A549 (cell line): ENCODE measurements at regions of chr10 and their contacts with region 1.

Region 1: DNA sequence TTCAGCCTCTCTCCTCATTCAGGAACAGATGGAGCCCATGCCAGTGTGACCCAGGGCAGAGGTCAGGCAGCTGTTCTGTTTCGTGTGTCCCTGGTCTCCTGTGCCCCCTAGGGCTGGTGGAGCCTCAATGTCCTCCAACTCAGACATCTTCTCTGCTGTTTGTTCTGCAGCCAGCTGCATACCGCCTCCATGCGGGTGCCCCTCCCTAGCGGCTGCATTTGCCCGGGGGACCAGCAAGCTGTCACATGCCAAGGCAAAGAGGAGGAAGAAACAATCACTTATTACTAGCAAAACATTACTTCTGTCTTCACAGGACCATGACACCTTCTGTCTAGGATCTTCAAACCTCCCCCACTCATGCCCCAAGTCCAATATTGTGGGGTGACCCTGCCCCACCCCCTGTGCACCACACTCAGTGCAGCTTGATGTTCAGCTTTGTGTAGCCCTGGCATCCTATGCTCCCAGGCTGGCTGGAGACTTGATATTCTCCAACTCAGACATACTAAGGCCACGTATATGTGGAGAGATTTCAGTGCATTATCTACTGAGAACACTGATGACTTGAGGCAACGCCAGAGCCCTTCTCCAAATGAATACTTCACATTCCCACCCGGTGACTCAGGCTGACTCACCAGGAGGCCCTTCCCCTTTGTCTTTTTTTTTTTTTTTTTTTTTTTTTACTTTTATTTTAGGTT is 188.9 kb downstream of the SKIDA1 start:
- DNase-seq: peak; percentile 86 to 97
- ATAC-seq: peak; percentile 88 to 90
- H3K4me3 ChIP-seq: no peak overlapping the region
- H3K27ac ChIP-seq: peak overlapping the region; percentile 95 to 96
- H3K4me1 ChIP-seq: peaks cover 55% of the 10 kb centered on the region
- CTCF ChIP-seq: peak; percentile 31
- EP300 ChIP-seq: peak; percentile 58 to 73; a peak in 3 of 5 replicates
- POLR2A ChIP-seq: no peak
- RAD21 ChIP-seq: peak; percentile 63 to 75

Region 2: DNA sequence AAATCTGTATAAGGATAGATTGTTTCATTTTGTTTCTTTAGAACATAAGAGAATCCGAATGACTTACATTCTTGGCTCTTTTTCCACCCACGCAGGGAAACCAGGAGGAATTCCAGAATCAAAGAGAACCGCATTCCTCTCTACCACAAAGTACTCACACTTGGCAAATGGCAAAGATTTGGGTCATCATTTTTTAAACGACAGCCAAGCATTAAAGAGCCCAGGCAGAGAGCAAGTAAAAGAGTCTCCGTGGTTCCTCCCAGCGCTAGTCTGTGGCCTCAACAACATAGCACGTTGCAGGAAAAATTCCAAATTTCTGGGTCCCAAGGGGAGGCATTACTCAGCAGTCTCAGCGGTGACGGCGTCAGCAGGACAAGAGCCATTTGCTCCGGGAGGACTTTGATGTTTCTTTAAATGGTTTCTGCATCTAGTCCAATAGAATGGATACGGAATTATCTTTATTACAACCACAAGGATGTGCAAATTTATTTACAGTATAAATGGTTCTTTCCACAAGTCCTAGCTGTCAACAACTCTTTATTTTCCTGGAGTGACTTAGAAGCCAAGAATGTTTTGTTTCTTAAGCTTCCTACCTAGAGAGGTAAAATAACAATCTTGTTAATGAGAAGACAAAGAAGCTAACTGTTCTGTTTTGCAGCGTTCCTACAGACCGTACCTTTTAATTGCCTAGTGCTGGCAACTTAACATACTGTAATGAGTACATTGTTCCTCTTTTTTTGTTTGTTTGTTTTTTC is 43.7 kb before region 1 on chr10:
- CTCF ChIA-PET with region 1: interaction called, 6 read pairs
- POLR2A ChIA-PET with region 1: interaction called, 17 read pairs
- DNase-seq: peak; percentile 89 to 98
- ATAC-seq: peak; percentile 93 to 97
- H3K4me3 ChIP-seq: peak overlapping the region; percentile 44
- H3K27ac ChIP-seq: peak overlapping the region; percentile 92 to 97
- H3K4me1 ChIP-seq: peaks cover 59% of the 10 kb centered on the region
- CTCF ChIP-seq: no peak
- EP300 ChIP-seq: peak; percentile 86 to 98
- POLR2A ChIP-seq: no peak
- RAD21 ChIP-seq: peak; percentile 40 to 65

Region 3: DNA sequence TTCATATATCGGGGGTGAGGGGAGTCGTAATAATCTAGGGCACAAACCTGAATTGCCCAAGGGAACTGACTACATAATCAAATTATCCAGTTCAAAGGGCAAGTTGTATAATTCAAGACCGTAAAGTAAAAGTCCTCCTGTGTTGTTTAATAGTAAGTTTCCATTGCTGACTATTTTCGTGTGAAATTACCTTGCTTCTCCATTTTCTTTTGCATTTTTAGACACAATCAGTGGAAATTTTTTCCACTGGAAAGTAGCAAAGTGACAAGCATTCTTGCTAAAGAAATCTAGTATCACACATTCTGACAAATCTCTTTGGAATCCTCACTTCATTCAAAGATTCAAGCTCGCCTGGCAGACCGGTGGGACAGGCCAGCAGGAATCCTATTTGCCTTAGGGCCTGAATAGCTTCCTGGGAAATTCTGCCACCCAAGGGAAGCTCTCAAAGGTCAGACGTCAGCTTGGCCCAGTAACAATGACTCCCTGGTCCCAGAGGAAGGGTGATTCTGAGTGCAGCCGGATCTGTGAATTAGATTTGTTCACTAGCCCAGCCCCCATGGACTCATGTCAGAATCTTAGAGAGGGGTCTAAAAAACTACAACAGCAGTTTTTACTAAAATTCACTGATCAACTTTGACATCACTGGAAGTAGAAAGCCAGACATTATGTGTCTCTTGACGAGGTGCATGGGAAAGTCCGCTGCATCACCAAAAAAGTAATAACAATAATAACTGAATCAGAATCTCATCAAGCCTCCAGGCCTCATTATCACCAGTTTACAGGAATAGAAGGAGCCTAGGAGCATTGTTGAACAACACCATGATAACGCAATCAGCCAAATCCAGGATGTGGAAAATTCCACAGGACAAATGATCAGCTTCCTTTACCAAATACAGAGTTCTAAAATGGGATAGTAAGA is 27.8 kb after region 1 on chr10:
- CTCF ChIA-PET with region 1: interaction called, 17 read pairs
- POLR2A ChIA-PET with region 1: interaction called, 6 read pairs
- DNase-seq: peak; percentile 89 to 99
- ATAC-seq: peak; percentile 96 to 97
- H3K4me3 ChIP-seq: peak overlapping the region; percentile 18; the same call in 1 of the 3 replicates
- H3K27ac ChIP-seq: peak overlapping the region; percentile 95 to 98
- H3K4me1 ChIP-seq: peaks cover 80% of the 10 kb centered on the region
- CTCF ChIP-seq: no peak
- EP300 ChIP-seq: peak; percentile 89 to 96; a peak in 4 of 5 replicates
- POLR2A ChIP-seq: no peak
- RAD21 ChIP-seq: peak; percentile 56 to 64

Region 4: GRCh38 chr10:21449288-21449966 is 112.8 kb after region 1 on chr10:
- CTCF ChIA-PET with region 1: no interaction called
- POLR2A ChIA-PET with region 1: no interaction called
- DNase-seq: no peak
- ATAC-seq: no peak
- H3K4me3 ChIP-seq: no peak overlapping the region
- H3K27ac ChIP-seq: no peak overlapping the region
- H3K4me1 ChIP-seq: no peaks in the 10 kb centered on the region
- CTCF ChIP-seq: no peak
- EP300 ChIP-seq: no peak
- POLR2A ChIP-seq: no peak
- RAD21 ChIP-seq: no peak

Region 5: GRCh38 chr10:21525367-21526183 is 189.0 kb after region 1 on chr10 and contains the start of gene SKIDA1:
- CTCF ChIA-PET with region 1: no interaction called
- POLR2A ChIA-PET with region 1: interaction called, 13 read pairs
- DNase-seq: peak; percentile 69 to 92
- ATAC-seq: peak; percentile 64 to 76
- H3K4me3 ChIP-seq: peak within 1 kb of the TSS; percentile 60
- H3K27ac ChIP-seq: peak within 1 kb of the TSS; percentile 94 to 99
- H3K4me1 ChIP-seq: peaks cover 30% of the 10 kb centered on the region
- CTCF ChIP-seq: no peak
- EP300 ChIP-seq: peak in 1 of 2 experiments; percentile 34; a peak in 1 of 5 replicates
- POLR2A ChIP-seq: peak; percentile 41
- RAD21 ChIP-seq: no peak
- polyA plus RNA-seq, gene SKIDA1: 0.87 and 1.0 TPM in 2 replicates